ENCODE measurements at regions of chr2 and their contacts with region 1.

Region 1: DNA sequence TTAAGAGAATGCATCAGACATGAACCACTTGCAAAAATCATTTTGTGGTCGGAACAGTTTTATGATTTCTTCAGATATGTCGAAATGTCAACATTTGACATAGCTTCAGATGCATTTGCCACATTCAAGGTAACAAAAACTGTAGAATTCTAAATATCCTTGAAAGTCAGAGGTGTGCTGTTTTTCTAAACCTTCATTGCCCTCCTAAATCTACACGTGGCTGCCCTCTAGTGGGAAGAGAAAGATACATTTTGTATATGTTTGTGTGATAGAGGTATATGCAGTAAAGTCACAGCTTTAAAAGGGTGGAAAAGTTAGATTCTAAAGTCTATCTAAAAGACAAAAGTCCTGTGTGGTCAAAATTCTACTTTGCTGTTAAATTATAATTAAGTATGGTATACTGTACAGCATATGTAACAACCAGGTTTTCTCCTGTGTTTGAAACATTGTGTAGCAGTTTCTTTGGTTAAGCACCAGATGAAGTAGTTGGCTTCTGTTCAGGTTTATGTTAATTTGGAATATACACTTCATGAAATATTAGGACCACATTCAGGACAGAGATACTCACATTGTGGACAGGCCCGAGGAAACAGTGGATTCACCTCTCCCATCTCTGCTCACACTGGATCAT is 65.9 kb upstream of the ITM2C start:
- DNase-seq: peak; percentile 58
- ATAC-seq: no peak
- H3K4me3 Mint-ChIP-seq: no peak overlapping the region
- H3K27ac Mint-ChIP-seq: peak overlapping the region; percentile 69
- H3K4me1 Mint-ChIP-seq: peaks cover 16% of the 10 kb centered on the region
- H3K27me3 Mint-ChIP-seq: no peaks in the 10 kb centered on the region
- CTCF ChIP-seq: peak; percentile 93

Region 2: GRCh38 chr2:230614913-230615332 is 184.0 kb before region 1 on chr2:
- CTCF ChIA-PET with region 1: interaction called, 33 read pairs
- POLR2A ChIA-PET with region 1: interaction called, 3 read pairs
- intact Hi-C with region 1: no loop called
- DNase-seq: peak; percentile 82
- ATAC-seq: peak; percentile 77
- H3K4me3 Mint-ChIP-seq: no peak overlapping the region
- H3K27ac Mint-ChIP-seq: peak overlapping the region; percentile 23
- H3K4me1 Mint-ChIP-seq: peaks cover 24% of the 10 kb centered on the region
- H3K27me3 Mint-ChIP-seq: no peaks in the 10 kb centered on the region
- CTCF ChIP-seq: no peak

Region 3: GRCh38 chr2:230712443-230713330 is 86.2 kb before region 1 on chr2 and contains the start of gene CAB39:
- CTCF ChIA-PET with region 1: interaction called, 65 read pairs
- POLR2A ChIA-PET with region 1: interaction called, 16 read pairs
- intact Hi-C with region 1: loop called (anchors 2 kb)
- DNase-seq: peak; percentile 84
- ATAC-seq: peak; percentile 89
- H3K4me3 Mint-ChIP-seq: peak within 1 kb of the TSS; percentile 88
- H3K27ac Mint-ChIP-seq: peak within 1 kb of the TSS; percentile 92
- H3K4me1 Mint-ChIP-seq: peaks cover 35% of the 10 kb centered on the region
- H3K27me3 Mint-ChIP-seq: no peaks in the 10 kb centered on the region
- CTCF ChIP-seq: peak; percentile 80
- total RNA-seq, gene CAB39: 119 to 120 TPM

Region 4: DNA sequence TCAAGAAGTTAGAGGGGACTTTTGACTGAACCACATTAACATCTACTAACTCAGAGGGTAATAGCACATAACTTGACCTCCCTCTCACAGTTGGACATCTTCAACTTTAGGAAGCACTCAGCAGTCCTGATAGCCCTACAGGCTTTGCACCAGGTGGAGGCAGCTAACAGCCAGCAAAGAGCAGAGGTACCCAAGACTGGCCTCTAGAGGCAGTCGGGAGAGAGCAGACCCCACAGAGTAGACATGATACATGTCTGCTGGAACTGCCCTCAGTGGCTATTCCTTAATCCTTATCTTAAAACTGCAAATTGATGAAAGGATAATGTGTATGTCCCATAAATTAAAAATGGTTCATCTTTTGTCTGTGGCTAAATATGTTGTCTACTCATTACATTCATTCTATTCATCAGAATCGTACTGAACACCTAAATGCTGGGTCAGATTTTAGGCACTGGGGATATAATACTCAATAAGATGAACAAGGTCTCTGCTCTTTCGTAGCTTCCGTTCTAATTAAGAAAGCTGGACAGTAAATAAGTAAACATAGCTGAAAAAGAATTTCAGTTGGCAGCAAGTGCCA is 36.5 kb before region 1 on chr2:
- CTCF ChIA-PET with region 1: interaction called, 14 read pairs
- POLR2A ChIA-PET with region 1: interaction called, 5 read pairs
- intact Hi-C with region 1: no loop called
- DNase-seq: peak; percentile 53
- ATAC-seq: peak; percentile 92
- H3K4me3 Mint-ChIP-seq: no peak overlapping the region
- H3K27ac Mint-ChIP-seq: no peak overlapping the region
- H3K4me1 Mint-ChIP-seq: peaks cover 59% of the 10 kb centered on the region
- H3K27me3 Mint-ChIP-seq: no peaks in the 10 kb centered on the region
- CTCF ChIP-seq: peak; percentile 44

Region 5: GRCh38 chr2:230781130-230781797 is 17.6 kb before region 1 on chr2:
- CTCF ChIA-PET with region 1: interaction called, 16 read pairs
- POLR2A ChIA-PET with region 1: interaction called, 19 read pairs
- intact Hi-C with region 1: no loop called
- DNase-seq: peak; percentile 78
- ATAC-seq: peak; percentile 89
- H3K4me3 Mint-ChIP-seq: no peak overlapping the region
- H3K27ac Mint-ChIP-seq: peak overlapping the region; percentile 65
- H3K4me1 Mint-ChIP-seq: peaks cover 79% of the 10 kb centered on the region
- H3K27me3 Mint-ChIP-seq: no peaks in the 10 kb centered on the region
- CTCF ChIP-seq: no peak

Region 6: DNA sequence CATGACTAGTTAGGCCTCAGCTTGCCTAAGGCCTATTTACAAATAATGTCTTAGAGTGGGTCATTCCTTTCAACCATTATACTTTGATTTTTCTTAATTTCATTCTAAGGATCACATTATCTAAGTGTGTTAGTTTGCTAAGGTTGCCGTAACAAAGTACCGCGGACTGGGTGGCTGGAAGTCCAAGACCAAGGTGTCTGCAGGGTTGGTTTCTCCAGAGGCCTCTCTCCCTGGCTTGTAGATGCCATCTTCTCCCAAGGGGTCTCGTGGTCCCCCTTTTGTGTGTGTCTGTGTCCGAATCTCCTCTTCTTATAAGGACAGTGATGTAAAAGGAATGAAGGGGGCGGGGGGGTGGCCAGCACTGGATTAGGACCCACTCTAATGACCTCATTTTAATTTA is 47.5 kb after region 1 on chr2:
- CTCF ChIA-PET with region 1: no interaction called
- POLR2A ChIA-PET with region 1: no interaction called
- intact Hi-C with region 1: no loop called
- DNase-seq: no peak
- ATAC-seq: no peak
- H3K4me3 Mint-ChIP-seq: no peak overlapping the region
- H3K27ac Mint-ChIP-seq: no peak overlapping the region
- H3K4me1 Mint-ChIP-seq: peaks cover 10% of the 10 kb centered on the region
- H3K27me3 Mint-ChIP-seq: peaks cover 15% of the 10 kb centered on the region
- CTCF ChIP-seq: no peak